CD8-positive, alpha-beta T cell (primary cell): ENCODE measurements at regions of chr2 and their contacts with region 1.

Region 1: GRCh38 chr2:26330113-26330549 is 15.8 kb upstream of the SELENOI start:
- DNase-seq: peak; percentile 68 to 88 (median 79)
- ATAC-seq: peak; percentile 99
- H3K4me3 ChIP-seq: no peak overlapping the region
- H3K4me3 Mint-ChIP-seq: no peak overlapping the region
- H3K27ac ChIP-seq: no peak overlapping the region
- H3K27ac Mint-ChIP-seq: no peak overlapping the region
- H3K4me1 ChIP-seq: peaks cover 8% of the 10 kb centered on the region
- H3K4me1 Mint-ChIP-seq: peaks cover 8% of the 10 kb centered on the region
- H3K27me3 ChIP-seq: no peaks in the 10 kb centered on the region
- H3K27me3 Mint-ChIP-seq: no peaks in the 10 kb centered on the region
- CTCF ChIP-seq: peak; percentile 91

Region 2: DNA sequence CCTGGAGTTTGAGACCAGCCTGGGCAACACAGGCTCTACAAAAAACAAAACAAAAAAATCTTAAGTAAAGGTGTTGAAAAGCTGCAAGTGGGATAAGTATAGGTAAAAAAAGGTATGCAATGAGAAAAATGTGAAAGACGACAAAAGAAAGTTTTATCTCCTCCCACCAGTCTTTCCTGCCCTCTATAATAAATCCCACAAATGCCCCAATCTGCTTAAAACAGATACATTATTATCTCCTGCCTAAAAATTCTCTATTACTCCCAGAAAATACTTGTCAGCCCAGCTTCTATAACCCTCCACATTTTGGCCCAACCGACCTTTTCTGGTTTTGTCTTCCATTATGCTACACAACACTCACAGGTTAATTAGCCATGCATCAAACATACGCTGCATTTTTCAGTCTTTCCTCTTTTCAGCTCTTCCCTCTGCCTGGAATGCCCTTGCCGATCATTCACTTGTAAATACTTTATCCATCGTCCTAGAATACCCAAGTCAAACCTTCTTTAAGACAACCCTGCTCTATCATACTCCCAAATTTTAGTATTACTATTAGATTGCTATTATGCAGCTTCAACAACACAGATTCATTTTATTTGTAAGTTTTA is 462.6 kb before region 1 on chr2:
- CTCF ChIA-PET with region 1: no interaction called
- POLR2A ChIA-PET with region 1: no interaction called
- intact Hi-C with region 1: no loop called
- DNase-seq: no peak
- ATAC-seq: no peak
- H3K4me3 ChIP-seq: no peak overlapping the region
- H3K4me3 Mint-ChIP-seq: no peak overlapping the region
- H3K27ac ChIP-seq: no peak overlapping the region
- H3K27ac Mint-ChIP-seq: no peak overlapping the region
- H3K4me1 ChIP-seq: no peaks in the 10 kb centered on the region
- H3K4me1 Mint-ChIP-seq: peaks cover 22% of the 10 kb centered on the region
- H3K27me3 ChIP-seq: no peaks in the 10 kb centered on the region
- H3K27me3 Mint-ChIP-seq: no peaks in the 10 kb centered on the region
- CTCF ChIP-seq: no peak

Region 3: GRCh38 chr2:25951071-25951547 is 379.0 kb before region 1 on chr2:
- CTCF ChIA-PET with region 1: interaction called, 8 read pairs
- POLR2A ChIA-PET with region 1: no interaction called
- intact Hi-C with region 1: loop called in 1 of 2 experiments (anchors 1 kb)
- DNase-seq: peak; percentile 42 to 84 (median 67)
- ATAC-seq: peak; percentile 96
- H3K4me3 ChIP-seq: no peak overlapping the region
- H3K4me3 Mint-ChIP-seq: no peak overlapping the region
- H3K27ac ChIP-seq: no peak overlapping the region
- H3K27ac Mint-ChIP-seq: no peak overlapping the region
- H3K4me1 ChIP-seq: no peaks in the 10 kb centered on the region
- H3K4me1 Mint-ChIP-seq: peaks cover 2% of the 10 kb centered on the region
- H3K27me3 ChIP-seq: no peaks in the 10 kb centered on the region
- H3K27me3 Mint-ChIP-seq: no peaks in the 10 kb centered on the region
- CTCF ChIP-seq: peak; percentile 89

Region 4: DNA sequence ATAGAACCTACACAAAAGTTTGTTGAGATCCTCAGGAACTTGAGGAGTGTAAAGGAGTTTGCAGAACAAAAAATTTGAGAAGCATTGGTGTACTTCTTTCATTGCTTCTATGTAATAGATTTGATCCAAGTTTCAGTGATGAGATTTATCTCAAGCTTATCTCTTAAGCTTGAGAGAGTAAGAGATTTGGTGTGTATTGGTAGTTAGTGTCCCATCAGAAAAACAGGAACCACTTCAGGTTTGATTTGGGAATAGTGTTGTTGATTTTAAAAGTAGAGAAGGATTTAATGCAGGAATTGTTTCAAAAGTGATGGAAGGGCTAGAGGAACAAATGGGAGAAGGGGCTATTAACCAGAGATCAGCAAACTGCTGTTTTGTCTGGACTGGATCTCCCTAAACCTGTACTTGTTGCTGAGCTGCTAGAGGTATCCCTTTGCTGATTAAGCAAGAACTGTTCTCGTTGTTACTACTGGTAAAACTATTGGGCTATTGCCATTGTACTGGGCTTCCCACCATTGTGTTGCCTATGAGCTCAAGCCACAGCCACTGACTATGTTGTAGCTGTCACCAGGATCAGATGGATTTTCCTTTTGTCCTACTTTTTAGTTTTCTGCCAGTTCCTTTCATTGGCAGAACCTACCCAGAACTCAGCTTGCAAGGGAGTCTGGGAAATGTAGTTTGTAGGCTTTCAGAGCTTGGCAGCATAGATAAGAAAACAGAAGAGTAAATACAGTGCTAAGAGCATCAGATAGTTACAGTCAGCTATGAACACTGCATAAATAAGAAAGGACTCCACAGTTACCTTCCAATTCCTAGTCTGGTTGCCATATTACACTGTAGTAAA is 257.0 kb before region 1 on chr2:
- CTCF ChIA-PET with region 1: no interaction called
- POLR2A ChIA-PET with region 1: no interaction called
- intact Hi-C with region 1: no loop called
- DNase-seq: no peak
- ATAC-seq: no peak
- H3K4me3 ChIP-seq: no peak overlapping the region
- H3K4me3 Mint-ChIP-seq: no peak overlapping the region
- H3K27ac ChIP-seq: no peak overlapping the region
- H3K27ac Mint-ChIP-seq: no peak overlapping the region
- H3K4me1 ChIP-seq: peaks cover 10% of the 10 kb centered on the region
- H3K4me1 Mint-ChIP-seq: peaks cover 50% of the 10 kb centered on the region
- H3K27me3 ChIP-seq: no peaks in the 10 kb centered on the region
- H3K27me3 Mint-ChIP-seq: no peaks in the 10 kb centered on the region
- CTCF ChIP-seq: no peak

Region 5: DNA sequence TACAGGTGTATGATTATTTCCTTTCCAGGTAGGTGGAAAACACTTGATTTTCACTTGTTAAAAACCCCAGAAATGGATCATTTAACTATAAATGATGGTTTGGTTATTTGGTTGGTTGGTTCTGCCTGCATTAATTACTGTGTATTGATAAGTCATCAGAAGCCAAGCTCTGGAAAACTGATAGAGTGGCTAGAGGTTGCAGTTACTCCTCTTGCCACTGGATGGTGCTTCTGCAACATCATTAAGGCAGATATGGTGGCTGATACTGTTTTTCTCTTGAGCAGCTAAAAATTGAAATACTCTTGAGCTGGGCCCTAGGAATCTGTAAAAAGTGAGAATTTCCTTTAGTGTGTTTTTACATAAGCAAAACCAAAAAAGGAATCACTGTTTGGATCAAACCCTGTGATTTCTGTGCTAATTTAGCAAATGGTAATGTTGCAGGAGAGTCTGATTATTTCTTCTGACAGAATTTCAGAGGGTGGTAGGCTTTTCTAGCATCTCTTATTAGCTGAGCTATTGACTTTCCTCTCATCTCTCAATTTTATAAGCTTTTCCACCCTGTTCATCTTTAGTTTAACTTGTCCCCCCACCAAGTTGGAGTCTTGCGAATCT is 242.0 kb before region 1 on chr2:
- CTCF ChIA-PET with region 1: interaction called, 4 read pairs
- POLR2A ChIA-PET with region 1: no interaction called
- intact Hi-C with region 1: loop called (anchors 1 to 2 kb)
- DNase-seq: peak in 4 of 9 experiments; percentile 9 to 61 (median 32)
- ATAC-seq: peak; percentile 69
- H3K4me3 ChIP-seq: no peak overlapping the region
- H3K4me3 Mint-ChIP-seq: no peak overlapping the region
- H3K27ac ChIP-seq: no peak overlapping the region
- H3K27ac Mint-ChIP-seq: no peak overlapping the region
- H3K4me1 ChIP-seq: peaks cover 4% of the 10 kb centered on the region
- H3K4me1 Mint-ChIP-seq: peaks cover 61% of the 10 kb centered on the region
- H3K27me3 ChIP-seq: no peaks in the 10 kb centered on the region
- H3K27me3 Mint-ChIP-seq: no peaks in the 10 kb centered on the region
- CTCF ChIP-seq: peak; percentile 69

Region 6: GRCh38 chr2:26235085-26235484 is 95.0 kb before region 1 on chr2:
- CTCF ChIA-PET with region 1: interaction called, 4 read pairs
- POLR2A ChIA-PET with region 1: no interaction called
- intact Hi-C with region 1: loop called (anchors 1 to 2 kb)
- DNase-seq: peak in 2 of 9 experiments; percentile 14 to 23
- ATAC-seq: no peak
- H3K4me3 ChIP-seq: no peak overlapping the region
- H3K4me3 Mint-ChIP-seq: no peak overlapping the region
- H3K27ac ChIP-seq: no peak overlapping the region
- H3K27ac Mint-ChIP-seq: no peak overlapping the region
- H3K4me1 ChIP-seq: no peaks in the 10 kb centered on the region
- H3K4me1 Mint-ChIP-seq: peaks cover 10% of the 10 kb centered on the region
- H3K27me3 ChIP-seq: no peaks in the 10 kb centered on the region
- H3K27me3 Mint-ChIP-seq: no peaks in the 10 kb centered on the region
- CTCF ChIP-seq: no peak

Region 7: GRCh38 chr2:26299471-26300101 is 30.5 kb before region 1 on chr2:
- CTCF ChIA-PET with region 1: interaction called, 6 read pairs
- POLR2A ChIA-PET with region 1: no interaction called
- intact Hi-C with region 1: loop called in 1 of 2 experiments (anchors 1 kb)
- DNase-seq: peak in 6 of 9 experiments; percentile 13 to 64 (median 29)
- ATAC-seq: peak; percentile 49
- H3K4me3 ChIP-seq: peak overlapping the region; percentile 78 to 84
- H3K4me3 Mint-ChIP-seq: no peak overlapping the region
- H3K27ac ChIP-seq: peak overlapping the region; percentile 68 to 80
- H3K27ac Mint-ChIP-seq: no peak overlapping the region
- H3K4me1 ChIP-seq: peaks cover 19% of the 10 kb centered on the region
- H3K4me1 Mint-ChIP-seq: no peaks in the 10 kb centered on the region
- H3K27me3 ChIP-seq: no peaks in the 10 kb centered on the region
- H3K27me3 Mint-ChIP-seq: no peaks in the 10 kb centered on the region
- CTCF ChIP-seq: no peak